Panc1 (cell line): ENCODE measurements at regions of chr16 and their contacts with region 1.

Region 1: GRCh38 chr16:30722443-30722842 is 23.5 kb downstream of the SRCAP start:
- DNase-seq: no peak
- ATAC-seq: no peak
- H3K4me3 ChIP-seq: no peak overlapping the region
- H3K27ac ChIP-seq: no peak overlapping the region
- H3K4me1 ChIP-seq: no peaks in the 10 kb centered on the region
- H3K27me3 ChIP-seq: no peaks in the 10 kb centered on the region
- CTCF ChIP-seq: no peak

Region 2: DNA sequence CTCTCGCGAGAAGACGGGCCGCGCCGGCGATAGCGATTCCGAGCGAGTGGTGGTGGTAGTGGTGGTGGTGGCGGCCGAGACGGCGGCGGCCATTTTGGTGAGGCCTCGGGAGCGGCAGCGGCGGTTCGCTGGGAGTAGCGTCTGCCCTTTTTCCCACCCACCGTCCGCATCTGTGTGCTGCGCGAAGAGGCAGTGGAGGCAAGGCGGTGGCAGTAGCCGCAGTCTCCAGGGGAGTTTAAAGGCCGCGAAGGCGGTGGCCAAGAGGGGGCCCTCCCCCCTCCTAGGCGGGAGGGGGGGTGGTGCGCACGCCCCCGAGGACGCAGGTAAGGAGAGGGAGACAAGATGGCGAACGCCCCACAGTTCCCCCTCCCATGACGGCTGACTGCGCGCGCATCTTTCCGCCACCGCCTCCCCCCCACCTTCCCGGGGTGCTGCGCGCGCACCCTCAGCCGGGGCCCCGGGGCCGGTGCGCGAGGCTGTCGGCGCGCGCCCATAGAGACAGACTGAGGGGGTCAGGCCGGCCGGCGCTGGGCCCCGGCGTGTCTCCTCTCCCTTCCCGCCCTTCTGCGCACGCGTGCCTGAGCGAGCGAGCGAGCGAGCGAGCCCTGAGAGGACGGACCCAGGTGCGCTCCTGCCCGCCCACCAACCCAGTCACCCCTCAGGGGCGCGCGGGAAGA is 24.2 kb before region 1 on chr16:
- CTCF ChIA-PET with region 1: no interaction called
- POLR2A ChIA-PET with region 1: no interaction called
- in situ Hi-C with region 1: no loop called
- intact Hi-C with region 1: no loop called
- DNase-seq: peak; percentile 86
- ATAC-seq: peak; percentile 85
- H3K4me3 ChIP-seq: peak overlapping the region; percentile 83 to 91
- H3K27ac ChIP-seq: peak overlapping the region; percentile 97
- H3K4me1 ChIP-seq: peaks cover 19% of the 10 kb centered on the region
- H3K27me3 ChIP-seq: no peaks in the 10 kb centered on the region
- CTCF ChIP-seq: no peak

Region 3: GRCh38 chr16:30918614-30919013 is 196.2 kb after region 1 on chr16:
- CTCF ChIA-PET with region 1: no interaction called
- POLR2A ChIA-PET with region 1: interaction called, 13 read pairs
- in situ Hi-C with region 1: no loop called
- intact Hi-C with region 1: no loop called
- DNase-seq: no peak
- ATAC-seq: no peak
- H3K4me3 ChIP-seq: no peak overlapping the region
- H3K27ac ChIP-seq: no peak overlapping the region
- H3K4me1 ChIP-seq: no peaks in the 10 kb centered on the region
- H3K27me3 ChIP-seq: no peaks in the 10 kb centered on the region
- CTCF ChIP-seq: no peak